ENCODE measurements at regions of chr5 and their contacts with region 1.

Region 1: DNA sequence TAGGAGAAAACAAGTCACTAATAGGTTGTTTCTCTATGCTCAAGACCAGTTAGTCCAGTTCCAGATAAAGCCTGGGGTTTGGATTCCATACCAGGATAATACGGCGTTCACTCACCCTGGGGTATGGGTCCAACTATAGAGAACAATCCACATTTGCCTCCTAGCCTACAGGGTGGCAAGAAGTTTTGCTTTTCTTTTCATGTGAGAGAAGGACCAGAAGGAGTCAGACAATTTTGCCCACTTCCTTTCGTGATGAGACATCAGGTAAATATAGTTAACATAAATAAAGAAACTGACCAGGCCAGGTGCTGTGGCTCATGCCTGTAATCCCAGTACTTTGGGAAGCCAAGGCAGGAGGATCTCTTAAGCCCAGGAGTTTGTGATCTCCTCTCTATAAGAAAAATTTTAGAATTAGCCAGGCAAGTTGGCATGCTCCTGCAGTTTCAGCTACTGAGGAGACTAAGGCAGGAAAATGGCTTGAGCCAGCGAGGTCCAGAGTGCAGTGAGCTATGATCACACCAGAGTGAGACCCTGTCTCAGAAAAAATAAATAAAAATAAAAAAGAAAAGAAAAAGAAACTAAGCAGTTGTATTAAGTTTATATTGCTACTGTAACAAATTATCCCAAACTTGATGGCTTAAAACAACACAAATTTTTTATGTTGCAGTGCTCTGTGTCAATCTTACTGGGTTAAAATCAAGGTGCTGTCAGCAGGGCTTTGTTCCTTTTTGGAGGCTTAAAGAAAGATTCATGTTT is 7.5 kb upstream of the REEP5 start:
- DNase-seq: peak; percentile 26
- H3K4me3 ChIP-seq: no peak overlapping the region
- H3K27ac ChIP-seq: no peak overlapping the region
- H3K4me1 ChIP-seq: peaks cover 0 to 4% (median 0%) of the 10 kb centered on the region in 4 donors
- H3K27me3 ChIP-seq: no peaks in the 10 kb centered on the region
- CTCF ChIP-seq: no peak
- EP300 ChIP-seq: no peak
- POLR2A ChIP-seq: no peak

Region 2: GRCh38 chr5:112976432-112977309 is 47.2 kb after region 1 on chr5 and contains the start of gene DCP2:
- intact Hi-C with region 1: loop called (anchors 5 kb)
- DNase-seq: peak; percentile 98
- H3K4me3 ChIP-seq: peak within 1 kb of the TSS; percentile 85 to 95 (median 88)
- H3K27ac ChIP-seq: peak within 1 kb of the TSS; percentile 86 to 93 (median 90)
- H3K4me1 ChIP-seq: peaks cover 13 to 37% (median 31%) of the 10 kb centered on the region in 4 donors
- H3K27me3 ChIP-seq: no peaks in the 10 kb centered on the region
- CTCF ChIP-seq: peak in 1 of 3 experiments; percentile 22
- EP300 ChIP-seq: no peak
- POLR2A ChIP-seq: peak; percentile 39
- total RNA-seq, gene DCP2: 15.7 to 26.7 (median 17.7) TPM

Measured in esophagus muscularis mucosa (tissue), 4 donors.